Activated B cell treated with CpG ODN at 0.5 μM for 24 hours (primary cell): ENCODE measurements at regions of chr15 and their contacts with region 1.

Region 1: DNA sequence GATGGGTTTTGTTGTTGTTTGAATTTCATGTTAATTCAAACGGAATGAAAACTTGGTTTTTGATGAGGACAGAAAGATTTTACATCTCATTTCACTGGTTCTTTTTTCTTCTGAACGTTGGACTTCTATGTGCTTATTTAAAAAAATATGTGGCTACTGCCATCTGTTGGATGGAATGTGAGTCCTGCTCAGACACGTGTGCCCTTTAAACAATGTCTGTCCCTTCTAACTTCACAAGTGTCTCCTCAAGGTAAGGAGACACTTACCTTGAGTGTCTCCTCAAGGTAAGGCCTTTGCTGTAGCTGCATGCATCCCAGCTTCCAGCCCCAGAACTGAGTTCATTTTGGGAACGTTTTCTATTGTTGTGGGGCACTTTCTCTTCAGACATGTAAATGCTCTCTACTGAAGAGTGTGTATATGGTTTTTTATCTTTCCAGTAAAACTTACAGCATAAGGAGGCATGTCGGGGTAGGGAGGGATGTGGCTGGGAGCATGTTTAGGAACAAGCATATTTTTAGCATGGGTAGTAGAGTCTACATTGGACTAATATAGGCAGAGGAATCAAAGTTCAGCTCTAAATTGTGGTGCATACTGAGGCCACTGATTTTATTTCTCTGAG is 63.1 kb upstream of the UBE3A start:
- DNase-seq: no peak
- ATAC-seq: no peak
- H3K4me3 Mint-ChIP-seq: no peak overlapping the region
- H3K27ac Mint-ChIP-seq: no peak overlapping the region
- H3K4me1 Mint-ChIP-seq: no peaks in the 10 kb centered on the region
- H3K27me3 Mint-ChIP-seq: no peaks in the 10 kb centered on the region
- CTCF ChIP-seq: no peak

Region 2: DNA sequence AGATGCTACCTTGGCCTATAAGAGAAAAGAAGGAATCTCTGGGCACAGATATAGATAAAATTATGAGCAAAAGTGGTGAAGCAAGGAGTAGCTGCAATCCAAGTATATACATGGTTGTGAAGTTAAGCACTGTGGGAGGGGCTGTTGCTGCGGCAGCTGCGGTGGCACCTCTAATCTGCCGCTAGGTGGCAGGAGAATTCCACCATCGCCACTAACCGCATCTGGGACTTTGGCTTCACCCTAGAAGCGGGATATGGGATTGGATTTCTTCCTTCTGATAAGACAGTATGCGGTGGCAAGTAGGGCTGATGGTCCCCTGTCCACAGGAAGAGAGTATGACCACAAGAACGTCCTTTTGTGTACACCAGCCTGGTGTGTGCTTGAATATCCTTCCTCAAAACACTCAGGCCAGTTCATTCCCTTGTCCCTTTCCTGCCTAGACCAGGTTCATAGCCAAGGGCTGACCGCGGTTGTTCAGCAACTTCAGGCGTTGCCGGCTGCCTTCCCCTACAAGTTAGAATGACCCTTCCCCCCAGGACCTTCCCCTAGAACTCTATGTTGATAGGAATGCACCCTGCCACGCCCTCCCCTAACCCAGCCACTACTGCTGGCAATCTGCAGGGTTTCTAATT is 1859.4 kb before region 1 on chr15:
- CTCF ChIA-PET with region 1: interaction called, 21 read pairs
- POLR2A ChIA-PET with region 1: no interaction called
- intact Hi-C with region 1: loop called (anchors 1 kb)
- DNase-seq: no peak
- ATAC-seq: no peak
- H3K4me3 Mint-ChIP-seq: no peak overlapping the region
- H3K27ac Mint-ChIP-seq: no peak overlapping the region
- H3K4me1 Mint-ChIP-seq: no peaks in the 10 kb centered on the region
- H3K27me3 Mint-ChIP-seq: no peaks in the 10 kb centered on the region
- CTCF ChIP-seq: peak; percentile 23

Region 3: DNA sequence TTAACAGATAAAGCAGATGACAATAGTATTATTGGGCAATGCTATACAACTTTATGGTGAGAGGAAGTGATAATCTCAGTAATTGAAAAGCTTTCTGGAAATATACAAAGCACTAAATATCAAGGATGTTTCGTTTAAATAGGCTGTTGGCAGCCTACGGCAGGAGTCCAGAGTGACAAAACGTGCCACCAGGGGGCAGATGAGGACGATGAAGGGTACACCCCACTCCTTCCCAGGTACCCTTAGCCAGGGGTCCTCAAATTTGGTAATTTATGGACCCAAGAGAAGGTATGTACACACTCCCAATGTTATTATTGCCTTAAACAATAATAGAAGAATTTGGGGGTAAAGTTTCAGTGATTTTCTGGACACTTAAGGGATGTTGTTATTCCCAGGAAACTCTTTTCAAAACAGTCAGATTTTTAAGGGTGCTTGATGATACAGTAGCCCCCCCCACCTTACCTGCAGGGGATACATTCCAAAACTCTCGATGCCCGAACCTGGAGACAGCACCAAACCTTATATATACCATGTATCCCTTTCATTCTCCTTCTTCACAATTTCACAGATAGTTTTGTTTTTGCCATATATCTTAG is 1852.9 kb before region 1 on chr15:
- CTCF ChIA-PET with region 1: interaction called, 4 read pairs
- POLR2A ChIA-PET with region 1: no interaction called
- intact Hi-C with region 1: loop called (anchors 1 kb)
- DNase-seq: no peak
- ATAC-seq: no peak
- H3K4me3 Mint-ChIP-seq: no peak overlapping the region
- H3K27ac Mint-ChIP-seq: no peak overlapping the region
- H3K4me1 Mint-ChIP-seq: no peaks in the 10 kb centered on the region
- H3K27me3 Mint-ChIP-seq: peaks cover 7% of the 10 kb centered on the region
- CTCF ChIP-seq: no peak

Region 4: DNA sequence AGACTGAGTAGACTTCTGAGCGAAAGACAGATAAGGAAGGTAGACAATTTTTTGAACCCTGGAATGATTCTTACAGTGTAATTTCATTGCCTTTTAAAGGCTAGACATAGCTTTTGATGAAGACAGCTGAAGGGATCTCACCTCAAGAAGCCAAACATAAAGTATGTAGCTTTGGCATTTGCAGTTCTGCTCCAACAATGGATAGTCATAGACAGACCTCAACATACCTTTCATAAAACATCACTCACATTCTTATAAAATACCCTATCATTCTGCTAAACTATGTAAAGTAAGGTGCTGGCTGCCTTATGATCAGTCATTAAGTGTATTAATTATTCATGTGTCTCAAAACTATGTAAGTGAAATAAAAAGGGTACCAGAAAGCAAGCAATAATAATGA is 133.1 kb before region 1 on chr15:
- CTCF ChIA-PET with region 1: no interaction called
- POLR2A ChIA-PET with region 1: no interaction called
- intact Hi-C with region 1: no loop called
- DNase-seq: no peak
- ATAC-seq: no peak
- H3K4me3 Mint-ChIP-seq: no peak overlapping the region
- H3K27ac Mint-ChIP-seq: no peak overlapping the region
- H3K4me1 Mint-ChIP-seq: peaks cover 6% of the 10 kb centered on the region
- H3K27me3 Mint-ChIP-seq: no peaks in the 10 kb centered on the region
- CTCF ChIP-seq: no peak